ENCODE measurements at regions of chr7 and their contacts with region 1.

Region 1: DNA sequence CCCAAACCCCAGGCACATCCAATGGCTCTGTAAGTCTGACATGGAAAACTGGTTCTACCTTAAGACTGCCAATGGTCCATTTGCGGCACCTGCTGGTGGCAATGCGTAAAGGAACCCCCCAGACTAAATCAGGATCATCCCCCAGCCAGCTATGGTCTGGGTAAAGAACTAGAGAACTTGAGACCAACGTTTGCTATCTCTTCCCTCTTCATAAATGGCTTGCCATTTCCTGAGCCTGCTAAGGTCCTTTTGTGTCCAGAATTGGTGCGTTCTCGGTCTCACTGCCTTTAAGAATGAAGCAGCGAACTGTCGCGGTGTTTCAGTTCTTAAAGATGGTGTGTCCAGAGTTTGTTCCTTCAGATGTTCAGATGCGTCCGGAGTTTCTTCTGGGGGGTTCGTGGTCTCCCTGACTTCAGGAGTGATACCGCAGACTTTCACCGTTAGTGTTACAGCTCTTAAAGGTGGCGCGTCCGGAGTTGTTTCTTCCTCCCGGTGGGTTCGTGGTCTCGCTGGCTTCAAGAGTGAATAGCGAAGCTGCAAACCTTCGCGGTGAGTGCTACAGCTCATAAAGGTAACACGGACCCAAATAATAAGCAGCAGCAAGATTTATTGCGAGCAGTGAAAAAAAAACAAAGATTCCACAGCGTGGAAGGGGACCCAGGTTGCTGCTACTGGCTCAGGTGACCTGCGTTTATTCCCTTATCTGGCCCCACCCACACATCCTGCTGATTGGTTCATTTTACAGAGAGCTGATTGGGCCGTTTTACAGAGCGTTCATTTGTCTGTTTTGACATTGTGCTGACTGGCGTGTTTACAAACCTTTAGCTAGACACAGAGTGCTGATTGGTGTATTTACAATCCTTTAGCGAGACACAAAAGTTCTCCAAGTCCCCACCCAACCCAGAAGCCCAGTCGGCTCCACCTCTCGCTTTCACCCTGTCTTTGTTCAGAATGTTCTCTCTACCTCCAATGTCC is 95.4 kb downstream of the ELMO1 start:
- DNase-seq: peak; percentile 83
- ATAC-seq: peak; percentile 87
- H3K4me3 Mint-ChIP-seq: peak overlapping the region; percentile 88
- H3K27ac Mint-ChIP-seq: peak overlapping the region; percentile 77
- H3K4me1 Mint-ChIP-seq: peaks cover 54% of the 10 kb centered on the region
- H3K27me3 Mint-ChIP-seq: no peaks in the 10 kb centered on the region

Region 2: GRCh38 chr7:37208528-37208927 is 144.7 kb before region 1 on chr7:
- CTCF ChIA-PET with region 1: interaction called, 16 read pairs
- POLR2A ChIA-PET with region 1: no interaction called
- DNase-seq: peak; percentile 42
- ATAC-seq: no peak
- H3K4me3 Mint-ChIP-seq: no peak overlapping the region
- H3K27ac Mint-ChIP-seq: no peak overlapping the region
- H3K4me1 Mint-ChIP-seq: peaks cover 4% of the 10 kb centered on the region
- H3K27me3 Mint-ChIP-seq: no peaks in the 10 kb centered on the region

Region 3: GRCh38 chr7:37269711-37270508 is 83.4 kb before region 1 on chr7:
- CTCF ChIA-PET with region 1: interaction called, 10 read pairs
- POLR2A ChIA-PET with region 1: interaction called, 3 read pairs
- DNase-seq: no peak
- ATAC-seq: no peak
- H3K4me3 Mint-ChIP-seq: no peak overlapping the region
- H3K27ac Mint-ChIP-seq: no peak overlapping the region
- H3K4me1 Mint-ChIP-seq: peaks cover 18% of the 10 kb centered on the region
- H3K27me3 Mint-ChIP-seq: no peaks in the 10 kb centered on the region

Region 4: DNA sequence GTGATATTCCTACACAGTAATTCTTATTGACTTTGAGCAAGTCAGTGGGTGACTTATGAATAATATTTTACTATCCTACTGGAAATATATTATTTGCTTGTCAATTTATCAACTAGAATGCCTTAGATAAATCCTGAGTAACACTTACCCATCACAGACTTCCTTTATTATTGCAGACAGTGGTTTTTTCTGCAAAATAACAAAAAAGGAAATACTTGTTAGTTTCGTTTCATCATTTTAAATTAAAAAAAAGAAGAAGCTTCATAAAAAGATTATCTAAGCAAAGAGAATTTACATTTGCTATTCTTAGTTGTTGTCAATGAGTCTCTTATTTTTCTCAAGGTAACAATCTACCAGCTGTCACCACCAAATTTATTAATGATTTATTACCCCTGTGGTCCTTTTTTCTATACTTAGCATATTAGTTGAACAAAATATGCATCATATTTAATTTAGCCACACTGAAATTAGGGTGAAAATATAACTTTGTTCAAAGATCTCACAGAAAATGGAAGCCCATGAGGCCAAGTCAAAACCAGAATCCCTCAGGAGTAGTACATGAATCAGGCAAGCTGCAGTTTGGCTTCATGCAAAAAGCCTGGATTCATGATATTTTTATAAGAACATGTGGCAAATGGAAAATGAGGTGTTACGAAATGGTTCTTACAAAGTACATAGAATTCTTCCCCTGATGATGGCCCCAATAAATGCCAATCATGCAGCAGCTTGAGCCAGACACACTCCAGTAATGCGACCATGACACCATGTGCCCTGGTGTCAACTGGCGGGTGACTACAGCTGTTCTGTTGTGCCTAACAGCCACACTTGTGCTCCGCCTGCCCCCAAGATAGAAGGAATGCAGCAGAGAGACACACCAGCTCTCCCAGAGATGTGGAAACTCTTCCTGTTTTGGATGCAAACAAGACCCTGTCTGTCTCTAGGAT is 37.2 kb before region 1 on chr7:
- CTCF ChIA-PET with region 1: interaction called, 11 read pairs
- POLR2A ChIA-PET with region 1: interaction called, 3 read pairs
- DNase-seq: no peak
- ATAC-seq: no peak
- H3K4me3 Mint-ChIP-seq: no peak overlapping the region
- H3K27ac Mint-ChIP-seq: no peak overlapping the region
- H3K4me1 Mint-ChIP-seq: peaks cover 36% of the 10 kb centered on the region
- H3K27me3 Mint-ChIP-seq: no peaks in the 10 kb centered on the region

Region 5: DNA sequence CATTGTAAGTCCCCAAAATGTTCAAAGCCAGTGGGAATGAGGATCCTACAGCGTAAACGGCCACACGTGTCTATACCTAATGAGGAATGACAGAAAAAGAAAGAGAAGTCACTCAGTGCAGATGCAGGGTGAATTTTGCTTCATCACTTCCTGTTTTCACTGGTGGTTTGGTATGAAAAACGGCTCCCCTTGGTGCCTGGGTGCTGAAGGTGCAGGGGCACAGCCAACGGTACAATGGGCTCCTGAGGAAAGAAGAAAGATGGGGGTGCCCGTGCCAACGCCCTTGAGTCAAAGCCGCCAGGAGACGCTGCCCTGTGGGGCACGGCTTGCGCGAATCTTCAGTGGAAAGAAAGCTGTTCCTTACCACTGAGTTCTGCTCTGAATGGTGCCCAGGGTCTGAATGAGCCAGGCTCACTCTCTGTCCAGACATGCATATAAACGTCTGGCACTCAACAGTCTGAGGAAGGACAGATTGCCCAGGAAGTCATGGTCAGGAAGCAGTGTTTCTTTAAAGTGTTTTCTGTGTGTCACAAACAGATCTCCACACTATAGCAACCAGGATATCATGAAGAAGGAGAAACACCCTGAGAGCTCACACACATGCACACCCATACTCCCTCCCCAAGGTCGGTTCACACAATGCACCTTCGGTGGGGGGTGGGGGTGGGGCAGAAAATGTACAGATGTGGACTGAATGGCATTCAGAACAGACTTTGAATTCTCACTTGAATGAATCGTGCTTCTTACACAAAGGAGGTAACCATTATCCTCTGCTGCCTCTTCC is 10.4 kb before region 1 on chr7:
- CTCF ChIA-PET with region 1: interaction called, 21 read pairs
- POLR2A ChIA-PET with region 1: interaction called, 21 read pairs
- DNase-seq: peak; percentile 81
- ATAC-seq: peak; percentile 83
- H3K4me3 Mint-ChIP-seq: peak overlapping the region; percentile 98
- H3K27ac Mint-ChIP-seq: peak overlapping the region; percentile 99
- H3K4me1 Mint-ChIP-seq: peaks cover 57% of the 10 kb centered on the region
- H3K27me3 Mint-ChIP-seq: no peaks in the 10 kb centered on the region

Region 6: GRCh38 chr7:37448636-37449361 is 95.5 kb after region 1 on chr7 and contains the start of gene ELMO1:
- CTCF ChIA-PET with region 1: interaction called, 28 read pairs
- POLR2A ChIA-PET with region 1: interaction called, 22 read pairs
- DNase-seq: peak; percentile 89
- ATAC-seq: peak; percentile 93
- H3K4me3 Mint-ChIP-seq: peak within 1 kb of the TSS; percentile 87
- H3K27ac Mint-ChIP-seq: peak within 1 kb of the TSS; percentile 90
- H3K4me1 Mint-ChIP-seq: peaks cover 51% of the 10 kb centered on the region
- H3K27me3 Mint-ChIP-seq: peaks cover 3% of the 10 kb centered on the region
- total RNA-seq, gene ELMO1: 64.0 to 68.5 TPM